ENCODE measurements at regions of chr19 and their contacts with region 1.

Region 1: DNA sequence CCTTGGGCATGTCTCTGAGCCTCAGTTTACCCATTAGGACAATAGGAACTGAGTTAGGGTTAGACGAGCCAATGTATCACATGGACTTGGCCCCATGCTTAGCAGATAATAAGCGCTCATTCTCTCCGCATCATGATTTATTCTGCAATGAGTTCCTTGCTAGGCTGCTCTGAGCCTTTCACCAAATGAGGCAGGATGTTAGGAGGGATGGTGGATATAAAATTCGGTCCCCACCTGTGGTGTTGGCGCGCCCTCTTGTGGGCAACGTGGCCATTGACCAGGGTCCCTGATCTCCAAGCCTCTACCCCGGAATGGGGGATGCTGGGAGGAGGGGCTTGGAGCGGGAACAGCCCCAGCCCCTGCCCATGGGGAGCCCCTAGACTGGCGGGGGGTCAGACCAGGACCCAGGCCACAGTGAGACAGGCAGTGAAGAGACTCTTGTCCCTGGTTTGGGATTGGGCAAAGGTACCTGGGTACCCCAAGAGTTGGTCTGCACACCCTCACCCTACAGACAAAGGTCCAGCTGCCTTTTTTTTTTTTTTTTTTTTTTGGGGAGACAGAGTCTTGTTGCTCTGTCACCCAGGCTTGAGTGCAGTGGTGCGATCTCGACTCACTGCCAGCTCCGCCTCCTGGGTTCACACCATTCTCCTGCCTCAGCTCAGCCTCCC is 43.9 kb downstream of the CERS4 start:
- DNase-seq: peak; percentile 53 to 89 (median 79)
- ATAC-seq: peak; percentile 84 to 98 (median 86)
- H3K4me3 ChIP-seq: no peak overlapping the region
- H3K4me3 Mint-ChIP-seq: no peak overlapping the region
- H3K27ac ChIP-seq: no peak overlapping the region
- H3K27ac Mint-ChIP-seq: no peak overlapping the region
- H3K4me1 ChIP-seq: peaks cover 0 to 8% of the 10 kb centered on the region in 2 experiments
- H3K4me1 Mint-ChIP-seq: peaks cover 2 to 10% (median 4%) of the 10 kb centered on the region in 3 donors
- H3K27me3 ChIP-seq: no peaks in the 10 kb centered on the region
- H3K27me3 Mint-ChIP-seq: no peaks in the 10 kb centered on the region

Region 2: DNA sequence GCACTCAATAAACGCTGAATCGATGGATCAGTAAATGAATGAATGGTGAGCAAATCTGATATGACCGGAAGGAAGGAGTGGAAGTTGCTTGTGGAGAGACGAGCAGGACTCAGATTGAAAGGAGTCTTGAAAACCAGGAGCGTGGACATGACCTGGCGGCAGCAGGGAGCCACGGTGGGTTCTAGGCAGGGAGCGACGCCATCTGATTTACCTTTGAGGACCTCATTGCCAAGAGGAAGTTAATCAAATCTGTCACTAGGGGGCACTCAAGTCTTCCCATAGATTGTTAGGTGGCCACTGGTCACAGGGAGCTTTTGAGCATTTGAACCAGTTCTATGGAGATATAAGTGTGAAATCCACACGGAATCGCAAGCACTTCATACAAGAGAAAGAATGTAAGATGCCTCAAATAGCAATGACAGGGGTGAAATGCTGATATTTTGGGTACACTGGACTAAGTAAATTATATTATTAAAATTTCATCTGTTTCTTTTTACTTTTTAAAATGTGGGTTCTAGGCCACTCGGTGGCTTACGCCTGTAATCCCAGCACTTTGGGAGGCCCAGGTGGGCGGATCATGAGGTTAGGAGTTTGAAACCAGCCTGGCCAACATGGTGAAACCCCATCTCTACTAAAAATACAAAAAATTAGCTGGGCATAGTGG is 94.5 kb before region 1 on chr19:
- CTCF ChIA-PET with region 1: interaction called, 9 to 10 read pairs
- POLR2A ChIA-PET with region 1: no interaction called
- DNase-seq: peak in 22 of 35 experiments; percentile 2 to 84 (median 24)
- ATAC-seq: peak; percentile 43 to 69 (median 63)
- H3K4me3 ChIP-seq: no peak overlapping the region
- H3K4me3 Mint-ChIP-seq: no peak overlapping the region
- H3K27ac ChIP-seq: no peak overlapping the region
- H3K27ac Mint-ChIP-seq: no peak overlapping the region
- H3K4me1 ChIP-seq: no peaks in the 10 kb centered on the region
- H3K4me1 Mint-ChIP-seq: no peaks in the 10 kb centered on the region
- H3K27me3 ChIP-seq: peaks cover 0 to 28% of the 10 kb centered on the region in 2 experiments
- H3K27me3 Mint-ChIP-seq: peaks cover 14 to 15% of the 10 kb centered on the region in 2 donors

Region 3: DNA sequence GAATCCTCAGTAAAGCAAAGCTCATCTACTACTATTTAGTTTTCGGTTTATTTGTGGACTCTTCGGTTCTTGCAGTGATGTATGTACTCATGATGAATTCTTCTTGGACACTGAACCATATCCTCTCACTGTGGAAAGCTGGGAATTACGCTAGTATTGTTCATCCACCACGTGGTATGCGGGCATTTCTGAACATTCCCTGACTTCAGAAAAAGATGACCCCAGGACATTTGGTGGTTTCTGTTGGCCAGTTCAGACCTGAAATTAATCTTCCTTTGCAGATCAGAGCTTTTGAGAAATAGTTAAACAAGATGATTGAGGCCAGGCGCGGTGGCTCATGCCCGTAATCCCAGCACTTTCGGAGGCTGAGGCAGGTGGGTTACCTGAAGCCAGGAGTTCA is 78.3 kb before region 1 on chr19:
- CTCF ChIA-PET with region 1: interaction called, 3 to 10 read pairs
- POLR2A ChIA-PET with region 1: no interaction called
- DNase-seq: no peak
- ATAC-seq: no peak
- H3K4me3 ChIP-seq: no peak overlapping the region
- H3K4me3 Mint-ChIP-seq: no peak overlapping the region
- H3K27ac ChIP-seq: no peak overlapping the region
- H3K27ac Mint-ChIP-seq: no peak overlapping the region
- H3K4me1 ChIP-seq: no peaks in the 10 kb centered on the region
- H3K4me1 Mint-ChIP-seq: no peaks in the 10 kb centered on the region
- H3K27me3 ChIP-seq: peaks cover 0 to 3% of the 10 kb centered on the region in 2 experiments
- H3K27me3 Mint-ChIP-seq: no peaks in the 10 kb centered on the region

Region 4: GRCh38 chr19:8269724-8270123 is 16.7 kb after region 1 on chr19:
- CTCF ChIA-PET with region 1: interaction called in 1 of 2 experiments, 14 read pairs
- POLR2A ChIA-PET with region 1: interaction called in 1 of 2 experiments, 4 read pairs
- DNase-seq: no peak
- ATAC-seq: no peak
- H3K4me3 ChIP-seq: peak overlapping the region in 1 of 2 donors; percentile 78
- H3K4me3 Mint-ChIP-seq: peak overlapping the region; percentile 82 to 93 (median 90)
- H3K27ac ChIP-seq: peak overlapping the region; percentile 86
- H3K27ac Mint-ChIP-seq: peak overlapping the region; percentile 91 to 96
- H3K4me1 ChIP-seq: peaks cover 3 to 12% of the 10 kb centered on the region in 2 experiments
- H3K4me1 Mint-ChIP-seq: peaks cover 11 to 14% (median 13%) of the 10 kb centered on the region in 3 donors
- H3K27me3 ChIP-seq: no peaks in the 10 kb centered on the region
- H3K27me3 Mint-ChIP-seq: no peaks in the 10 kb centered on the region

Region 5: GRCh38 chr19:8373867-8374813 is 121.1 kb after region 1 on chr19:
- CTCF ChIA-PET with region 1: no interaction called
- POLR2A ChIA-PET with region 1: no interaction called
- DNase-seq: no peak
- ATAC-seq: no peak
- H3K4me3 ChIP-seq: no peak overlapping the region
- H3K4me3 Mint-ChIP-seq: no peak overlapping the region
- H3K27ac ChIP-seq: no peak overlapping the region
- H3K27ac Mint-ChIP-seq: no peak overlapping the region
- H3K4me1 ChIP-seq: peaks cover 0 to 9% of the 10 kb centered on the region in 2 experiments
- H3K4me1 Mint-ChIP-seq: peaks cover 10 to 13% (median 13%) of the 10 kb centered on the region in 3 donors
- H3K27me3 ChIP-seq: peaks cover 0 to 11% of the 10 kb centered on the region in 2 experiments
- H3K27me3 Mint-ChIP-seq: no peaks in the 10 kb centered on the region